ENCODE measurements at regions of chr4 and their contacts with region 1.

Region 1: DNA sequence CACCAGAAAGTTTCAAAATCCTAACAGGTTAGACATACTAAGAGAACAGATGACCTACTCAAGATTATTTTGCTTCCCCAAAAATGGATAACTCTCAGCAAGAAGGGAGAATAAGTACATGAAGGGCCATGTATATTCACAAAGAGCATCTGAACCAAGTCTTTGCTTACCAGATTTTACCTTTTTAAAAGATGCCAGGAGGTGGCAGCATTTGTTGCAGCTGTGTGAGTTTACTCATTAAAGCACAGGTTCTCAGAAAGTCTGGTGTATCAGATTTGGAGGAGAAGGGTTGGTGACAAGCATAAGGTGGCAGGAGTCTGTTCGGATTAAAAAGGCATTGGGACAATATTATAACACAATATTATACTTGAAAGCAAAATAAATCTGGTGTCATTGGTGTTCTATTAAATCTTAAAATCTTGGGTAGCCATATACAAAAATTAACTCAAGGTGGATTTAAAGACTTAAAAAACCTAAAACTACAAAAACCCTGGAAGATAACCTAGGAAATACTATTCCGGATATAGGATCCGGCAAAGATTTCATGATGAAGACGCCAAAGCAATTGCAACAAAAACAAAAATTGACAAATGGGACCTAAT is 51.3 kb upstream of the NFKB1 start:
- DNase-seq: no peak
- H3K4me3 ChIP-seq: no peak overlapping the region
- H3K27ac ChIP-seq: no peak overlapping the region
- H3K4me1 ChIP-seq: no peaks in the 10 kb centered on the region
- H3K27me3 ChIP-seq: no peaks in the 10 kb centered on the region
- CTCF ChIP-seq: peak; percentile 37 to 49

Region 2: DNA sequence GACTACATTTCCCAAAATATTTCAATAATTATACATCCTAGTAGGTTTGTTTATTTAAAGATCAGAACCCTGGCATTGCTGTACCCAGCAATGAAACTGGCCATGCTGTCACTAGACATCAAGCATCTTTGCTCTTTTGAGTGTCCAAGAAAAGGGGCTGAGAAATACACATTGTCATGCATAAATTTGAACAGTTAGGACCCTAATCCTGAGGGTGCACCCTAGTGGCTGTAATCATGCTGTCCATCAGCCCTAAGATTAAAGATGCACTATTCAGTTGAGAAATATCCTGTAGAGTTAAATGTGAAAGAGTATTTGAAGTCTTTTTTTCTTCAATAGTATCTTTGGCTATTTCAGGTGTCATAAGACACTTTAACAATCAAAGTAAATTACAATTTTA is 160.2 kb after region 1 on chr4:
- intact Hi-C with region 1: loop called (anchors 10 kb)
- DNase-seq: no peak
- H3K4me3 ChIP-seq: no peak overlapping the region
- H3K27ac ChIP-seq: no peak overlapping the region
- H3K4me1 ChIP-seq: no peaks in the 10 kb centered on the region
- H3K27me3 ChIP-seq: no peaks in the 10 kb centered on the region
- CTCF ChIP-seq: no peak

Region 3: GRCh38 chr4:103008875-103009729 is 559.2 kb after region 1 on chr4:
- intact Hi-C with region 1: loop called (anchors 10 kb)
- DNase-seq: no peak
- H3K4me3 ChIP-seq: no peak overlapping the region
- H3K27ac ChIP-seq: no peak overlapping the region
- H3K4me1 ChIP-seq: peaks cover 0 to 16% (median 10%) of the 10 kb centered on the region in 4 donors
- H3K27me3 ChIP-seq: no peaks in the 10 kb centered on the region
- CTCF ChIP-seq: peak; percentile 67 to 79

Measured in tibial artery (tissue), 4 donors.